B cell (primary cell): ENCODE measurements at regions of chr14 and their contacts with region 1.

Region 1: GRCh38 chr14:54440873-54441868 is at the start of gene CNIH1:
- DNase-seq: peak; percentile 96
- ATAC-seq: peak; percentile 93
- H3K4me3 ChIP-seq: peak within 1 kb of the TSS; percentile 51 to 73 (median 62)
- H3K4me3 Mint-ChIP-seq: peak within 1 kb of the TSS; percentile 90
- H3K27ac ChIP-seq: peak within 1 kb of the TSS; percentile 74 to 82
- H3K27ac Mint-ChIP-seq: peak within 1 kb of the TSS; percentile 90
- H3K4me1 ChIP-seq: peaks cover 26 to 27% of the 10 kb centered on the region in 2 donors
- H3K4me1 Mint-ChIP-seq: peaks cover 46% of the 10 kb centered on the region
- H3K27me3 ChIP-seq: peaks cover 0 to under 1% (median 0%) of the 10 kb centered on the region in 4 experiments
- H3K27me3 Mint-ChIP-seq: peaks cover 3% of the 10 kb centered on the region
- CTCF ChIP-seq: peak; percentile 96
- total RNA-seq, gene CNIH1: 42.8 and 52.0 TPM in 2 replicates

Region 2: DNA sequence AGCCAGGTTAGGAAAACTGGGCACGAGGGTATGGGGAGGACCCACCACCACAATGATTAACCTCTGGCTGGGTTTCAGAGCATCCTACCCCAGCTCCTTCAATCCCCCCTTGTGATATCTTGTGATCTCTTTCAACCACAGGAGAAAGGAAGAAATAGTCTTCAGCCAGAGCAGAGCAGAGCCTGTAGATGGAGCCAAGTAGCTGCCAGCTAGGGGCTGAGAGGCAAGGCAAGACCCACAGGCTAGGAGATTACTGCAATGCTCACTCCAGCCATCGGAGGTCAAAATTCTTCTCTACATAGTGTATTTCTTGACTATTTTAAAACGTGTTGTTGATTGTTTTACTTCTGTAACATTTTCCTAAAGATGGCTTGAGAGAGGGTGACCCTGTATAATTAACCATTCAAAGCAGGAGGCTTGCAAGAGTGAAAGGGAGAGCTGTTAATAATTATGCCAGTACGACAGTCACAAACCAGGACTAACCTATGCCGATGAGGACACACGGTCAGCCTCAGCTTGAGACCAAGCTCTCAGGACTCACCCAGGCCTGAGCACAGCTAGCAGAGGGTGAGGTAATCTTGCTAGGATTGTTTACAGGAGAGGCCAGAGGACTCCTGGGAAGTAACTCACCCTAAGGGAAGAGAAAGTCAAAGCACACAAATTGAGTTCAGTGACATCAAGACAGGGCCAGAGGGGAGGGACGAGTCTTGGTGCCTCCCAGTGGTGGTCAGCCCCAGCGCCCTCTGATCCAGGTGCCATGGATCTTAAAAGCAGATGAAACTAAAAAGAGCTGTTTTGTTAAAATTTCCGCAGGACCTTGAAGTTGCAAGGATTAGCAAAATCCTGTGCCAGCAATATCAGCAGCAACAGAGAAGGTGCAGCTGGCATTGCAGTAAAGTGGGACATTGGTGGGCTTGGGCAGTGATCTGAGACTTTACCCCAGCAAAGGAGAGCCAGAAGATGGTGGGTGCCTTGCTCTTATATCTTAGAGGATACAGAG is 74.1 kb before region 1 on chr14:
- CTCF ChIA-PET with region 1: no interaction called
- POLR2A ChIA-PET with region 1: no interaction called
- intact Hi-C with region 1: loop called (anchors 1 kb)
- DNase-seq: peak; percentile 36
- ATAC-seq: peak; percentile 85
- H3K4me3 ChIP-seq: no peak overlapping the region
- H3K4me3 Mint-ChIP-seq: no peak overlapping the region
- H3K27ac ChIP-seq: no peak overlapping the region
- H3K27ac Mint-ChIP-seq: no peak overlapping the region
- H3K4me1 ChIP-seq: no peaks in the 10 kb centered on the region
- H3K4me1 Mint-ChIP-seq: peaks cover 1% of the 10 kb centered on the region
- H3K27me3 ChIP-seq: no peaks in the 10 kb centered on the region
- H3K27me3 Mint-ChIP-seq: peaks cover 25% of the 10 kb centered on the region
- CTCF ChIP-seq: peak; percentile 45

Region 3: DNA sequence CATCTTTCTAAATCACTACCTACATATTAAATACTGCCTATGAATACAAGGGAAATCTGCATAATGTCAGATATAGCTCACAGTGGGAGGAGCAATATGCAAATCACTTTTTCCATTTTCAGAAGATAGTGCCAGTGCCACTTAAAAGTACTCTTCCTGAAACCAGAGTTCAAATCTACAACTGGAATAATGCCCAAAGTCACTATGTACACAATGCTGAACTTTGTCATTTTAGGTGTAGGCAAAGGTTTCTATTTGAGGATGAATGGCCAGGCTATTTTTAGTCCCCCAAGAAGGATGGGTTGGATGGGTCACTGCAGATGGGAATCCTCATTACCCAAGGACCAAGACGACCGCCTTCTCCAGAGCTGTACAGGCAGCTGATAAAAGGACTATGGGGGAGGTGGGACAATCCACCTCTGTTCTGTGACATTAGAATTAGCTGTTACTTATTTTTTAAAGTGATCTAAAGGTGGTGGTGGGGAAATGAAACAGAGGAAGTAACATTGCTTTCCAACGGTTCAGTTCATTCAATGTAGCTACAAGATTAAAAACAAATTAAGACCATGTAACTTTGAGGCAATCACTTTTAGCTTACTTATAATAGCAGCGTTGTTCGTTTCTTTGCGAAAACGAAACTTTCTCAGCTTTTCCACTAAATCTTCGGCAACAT is 42.0 kb after region 1 on chr14:
- CTCF ChIA-PET with region 1: interaction called, 5 read pairs
- POLR2A ChIA-PET with region 1: no interaction called
- intact Hi-C with region 1: loop called (anchors 1 kb)
- DNase-seq: peak; percentile 52
- ATAC-seq: peak; percentile 73
- H3K4me3 ChIP-seq: peak overlapping the region; percentile 29 to 70 (median 45)
- H3K4me3 Mint-ChIP-seq: peak overlapping the region; percentile 67
- H3K27ac ChIP-seq: peak overlapping the region; percentile 33 to 83
- H3K27ac Mint-ChIP-seq: peak overlapping the region; percentile 87
- H3K4me1 ChIP-seq: peaks cover 40 to 57% of the 10 kb centered on the region in 2 donors
- H3K4me1 Mint-ChIP-seq: peaks cover 63% of the 10 kb centered on the region
- H3K27me3 ChIP-seq: no peaks in the 10 kb centered on the region
- H3K27me3 Mint-ChIP-seq: no peaks in the 10 kb centered on the region
- CTCF ChIP-seq: no peak

Region 4: DNA sequence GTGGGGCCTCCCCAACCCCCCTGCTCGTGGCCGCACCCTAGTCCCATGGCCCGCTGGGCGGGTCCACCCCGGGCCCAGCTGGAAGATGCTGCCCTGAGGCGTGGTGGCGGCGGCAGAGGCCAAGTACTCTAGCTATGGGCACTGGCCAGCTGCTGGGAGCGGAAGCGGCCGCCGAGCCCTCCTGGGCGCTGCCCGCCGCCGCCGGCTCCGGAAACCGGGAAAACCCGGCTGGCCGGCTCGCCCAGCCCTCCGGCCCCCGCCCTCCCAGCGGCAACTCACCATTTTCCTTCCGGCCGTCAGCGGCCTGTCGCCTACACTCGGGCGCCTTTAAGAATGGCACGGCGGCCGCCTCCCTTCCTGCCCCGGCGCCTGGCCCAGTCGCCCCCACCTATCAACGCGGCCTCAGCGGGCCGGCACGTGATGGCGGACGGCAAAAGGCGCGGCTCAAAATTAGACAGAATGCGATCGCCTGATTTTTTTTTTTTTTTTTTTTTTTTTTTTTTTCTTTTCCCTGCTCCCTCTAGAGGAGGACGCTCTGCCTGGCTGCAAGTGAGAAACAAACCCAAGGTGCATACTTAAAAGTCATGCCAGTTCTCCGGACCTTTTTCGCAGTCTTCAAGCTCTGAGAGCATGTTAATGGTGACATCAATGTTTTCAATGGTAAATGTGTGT is 47.6 kb after region 1 on chr14 and contains the start of gene GMFB:
- CTCF ChIA-PET with region 1: interaction called, 5 read pairs
- POLR2A ChIA-PET with region 1: interaction called, 7 read pairs
- intact Hi-C with region 1: loop called (anchors 1 kb)
- DNase-seq: peak; percentile 92
- ATAC-seq: peak; percentile 96
- H3K4me3 ChIP-seq: peak within 1 kb of the TSS; percentile 69 to 97 (median 83)
- H3K4me3 Mint-ChIP-seq: peak within 1 kb of the TSS; percentile 97
- H3K27ac ChIP-seq: peak within 1 kb of the TSS; percentile 82 to 97
- H3K27ac Mint-ChIP-seq: peak within 1 kb of the TSS; percentile 98
- H3K4me1 ChIP-seq: peaks cover 41 to 52% of the 10 kb centered on the region in 2 donors
- H3K4me1 Mint-ChIP-seq: peaks cover 57% of the 10 kb centered on the region
- H3K27me3 ChIP-seq: no peaks in the 10 kb centered on the region
- H3K27me3 Mint-ChIP-seq: no peaks in the 10 kb centered on the region
- CTCF ChIP-seq: no peak
- total RNA-seq, gene GMFB: 42.6 and 49.8 TPM in 2 replicates

Region 5: GRCh38 chr14:54509546-54510501 is 68.7 kb after region 1 on chr14 and contains the start of gene CGRRF1:
- CTCF ChIA-PET with region 1: interaction called, 5 read pairs
- POLR2A ChIA-PET with region 1: interaction called, 3 read pairs
- intact Hi-C with region 1: loop called (anchors 1 kb)
- DNase-seq: peak; percentile 98
- ATAC-seq: peak; percentile 98
- H3K4me3 ChIP-seq: peak within 1 kb of the TSS; percentile 79 to 99 (median 96)
- H3K4me3 Mint-ChIP-seq: peak within 1 kb of the TSS; percentile 98
- H3K27ac ChIP-seq: peak within 1 kb of the TSS; percentile 81
- H3K27ac Mint-ChIP-seq: peak within 1 kb of the TSS; percentile 94
- H3K4me1 ChIP-seq: peaks cover 21 to 25% of the 10 kb centered on the region in 2 donors
- H3K4me1 Mint-ChIP-seq: peaks cover 44% of the 10 kb centered on the region
- H3K27me3 ChIP-seq: no peaks in the 10 kb centered on the region
- H3K27me3 Mint-ChIP-seq: no peaks in the 10 kb centered on the region
- CTCF ChIP-seq: peak; percentile 57
- total RNA-seq, gene CGRRF1: 15.8 and 17.9 TPM in 2 replicates

Region 6: DNA sequence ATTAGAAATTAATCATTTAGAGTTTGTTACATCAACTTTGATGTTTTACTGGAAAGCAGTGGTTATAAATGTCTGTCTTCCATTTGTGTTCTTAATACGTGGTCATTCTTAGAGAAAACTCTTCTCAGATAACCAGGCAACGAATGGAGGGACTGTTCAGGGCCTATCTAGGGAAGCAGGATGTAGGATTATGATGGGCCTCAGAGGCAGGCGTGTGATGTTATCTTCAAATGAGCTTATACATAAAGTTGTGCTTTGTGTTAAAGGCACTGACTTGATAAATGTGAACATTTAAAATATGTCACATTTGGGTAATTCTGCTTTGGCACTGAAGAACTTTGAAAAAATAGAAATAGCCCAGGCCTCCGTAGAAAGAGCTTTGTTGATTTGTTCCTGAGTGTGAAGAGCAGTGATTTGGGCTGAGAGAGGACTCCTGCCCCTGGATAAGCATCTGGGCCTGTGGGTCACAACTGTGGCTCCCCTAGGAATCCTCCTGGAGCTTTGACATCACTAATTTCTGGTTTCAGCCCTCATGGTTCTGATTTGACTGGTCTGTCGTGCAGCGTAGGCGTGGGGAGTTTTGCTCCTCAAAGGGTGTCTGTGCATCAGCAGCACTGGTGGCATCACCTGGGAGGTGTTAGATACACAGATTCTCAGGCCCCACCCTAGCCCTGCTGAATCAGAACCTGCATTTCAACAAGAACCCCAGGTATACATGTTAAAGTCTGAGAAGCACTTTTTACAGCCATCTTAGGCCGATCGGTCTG is 181.2 kb after region 1 on chr14:
- CTCF ChIA-PET with region 1: no interaction called
- POLR2A ChIA-PET with region 1: no interaction called
- intact Hi-C with region 1: no loop called
- DNase-seq: no peak
- ATAC-seq: peak; percentile 17
- H3K4me3 ChIP-seq: no peak overlapping the region
- H3K4me3 Mint-ChIP-seq: no peak overlapping the region
- H3K27ac ChIP-seq: no peak overlapping the region
- H3K27ac Mint-ChIP-seq: no peak overlapping the region
- H3K4me1 ChIP-seq: peaks cover 10 to 11% of the 10 kb centered on the region in 2 donors
- H3K4me1 Mint-ChIP-seq: peaks cover 30% of the 10 kb centered on the region
- H3K27me3 ChIP-seq: no peaks in the 10 kb centered on the region
- H3K27me3 Mint-ChIP-seq: no peaks in the 10 kb centered on the region
- CTCF ChIP-seq: no peak